ENCODE measurements at regions of chr1 and their contacts with region 1.

Region 1: GRCh38 chr1:205535866-205536758 is 31.6 kb downstream of the CDK18 start:
- DNase-seq: no peak
- H3K4me3 ChIP-seq: no peak overlapping the region
- H3K27ac ChIP-seq: peak overlapping the region; percentile 57
- H3K4me1 ChIP-seq: peaks cover 40% of the 10 kb centered on the region
- H3K27me3 ChIP-seq: no peaks in the 10 kb centered on the region
- CTCF ChIP-seq: no peak

Region 2: GRCh38 chr1:205071028-205071409 is 465.1 kb before region 1 on chr1:
- CTCF ChIA-PET with region 1: no interaction called
- POLR2A ChIA-PET with region 1: interaction called, 11 read pairs
- intact Hi-C with region 1: no loop called
- DNase-seq: no peak
- H3K4me3 ChIP-seq: no peak overlapping the region
- H3K27ac ChIP-seq: no peak overlapping the region
- H3K4me1 ChIP-seq: no peaks in the 10 kb centered on the region
- H3K27me3 ChIP-seq: peaks cover 22% of the 10 kb centered on the region
- CTCF ChIP-seq: no peak

Region 3: GRCh38 chr1:205568469-205569361 is 32.6 kb after region 1 on chr1:
- CTCF ChIA-PET with region 1: no interaction called
- POLR2A ChIA-PET with region 1: no interaction called
- intact Hi-C with region 1: no loop called
- DNase-seq: peak in 1 of 2 experiments; percentile 25
- H3K4me3 ChIP-seq: peak overlapping the region; percentile 61
- H3K27ac ChIP-seq: no peak overlapping the region
- H3K4me1 ChIP-seq: peaks cover 17% of the 10 kb centered on the region
- H3K27me3 ChIP-seq: no peaks in the 10 kb centered on the region; the same call in 1 of the 2 replicates
- CTCF ChIP-seq: no peak